PC-3 (cell line): ENCODE measurements at regions of chr12 and their contacts with region 1.

Region 1: GRCh38 chr12:52879394-52880351 is 25.2 kb downstream of the KRT8 start:
- DNase-seq: peak; percentile 94
- ATAC-seq: peak; percentile 82
- H3K4me3 ChIP-seq: peak overlapping the region; percentile 54
- H3K27ac ChIP-seq: peak overlapping the region; percentile 52
- H3K4me1 ChIP-seq: peaks cover 28% of the 10 kb centered on the region
- H3K27me3 ChIP-seq: no peaks in the 10 kb centered on the region
- CTCF ChIP-seq: peak; percentile 71

Region 2: GRCh38 chr12:52139552-52140062 is 740.1 kb before region 1 on chr12:
- CTCF ChIA-PET with region 1: no interaction called
- POLR2A ChIA-PET with region 1: no interaction called
- intact Hi-C with region 1: loop called (anchors 5 kb)
- DNase-seq: peak; percentile 90
- ATAC-seq: peak; percentile 68
- H3K4me3 ChIP-seq: no peak overlapping the region
- H3K27ac ChIP-seq: no peak overlapping the region
- H3K4me1 ChIP-seq: peaks cover 16% of the 10 kb centered on the region
- H3K27me3 ChIP-seq: no peaks in the 10 kb centered on the region
- CTCF ChIP-seq: peak; percentile 96

Region 3: DNA sequence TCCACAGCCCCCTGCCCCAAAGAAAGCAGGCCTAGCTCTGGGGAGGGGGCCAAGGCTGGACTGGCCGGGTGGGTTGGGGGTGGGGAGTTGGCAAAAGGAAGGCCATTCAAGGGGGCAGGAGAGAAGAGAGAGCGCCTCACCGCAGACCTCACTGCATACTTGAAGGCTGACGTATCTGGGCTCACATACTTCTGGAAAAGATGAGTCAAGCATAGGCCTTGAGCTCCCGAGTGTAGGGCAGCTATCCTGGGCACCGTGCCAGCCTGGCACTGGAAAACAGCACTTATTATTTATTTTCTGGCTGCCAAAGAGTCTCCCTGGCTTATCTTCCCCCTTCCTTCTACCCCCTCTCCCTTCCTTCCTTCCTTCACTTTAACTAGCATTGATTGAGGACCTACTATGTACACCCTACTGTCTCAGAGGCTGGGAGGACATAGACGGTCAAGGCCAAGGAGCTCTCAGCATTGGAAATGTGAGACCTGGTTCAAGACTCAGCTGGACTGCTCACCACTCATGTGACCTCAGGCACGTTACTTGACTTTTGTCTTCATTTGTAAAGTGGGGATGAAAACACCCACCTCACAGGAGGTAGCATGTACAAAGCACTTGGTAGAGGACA is 687.4 kb before region 1 on chr12:
- CTCF ChIA-PET with region 1: no interaction called
- POLR2A ChIA-PET with region 1: interaction called, 19 read pairs
- intact Hi-C with region 1: no loop called
- DNase-seq: peak; percentile 99
- ATAC-seq: peak; percentile 86
- H3K4me3 ChIP-seq: peak overlapping the region; percentile 78
- H3K27ac ChIP-seq: peak overlapping the region; percentile 69
- H3K4me1 ChIP-seq: peaks cover 80% of the 10 kb centered on the region
- H3K27me3 ChIP-seq: no peaks in the 10 kb centered on the region
- CTCF ChIP-seq: no peak

Region 4: GRCh38 chr12:52372216-52373154 is 507.2 kb before region 1 on chr12:
- CTCF ChIA-PET with region 1: interaction called, 18 read pairs
- POLR2A ChIA-PET with region 1: no interaction called
- intact Hi-C with region 1: loop called (anchors 1 kb)
- DNase-seq: peak; percentile 88
- ATAC-seq: peak; percentile 93
- H3K4me3 ChIP-seq: no peak overlapping the region
- H3K27ac ChIP-seq: no peak overlapping the region
- H3K4me1 ChIP-seq: no peaks in the 10 kb centered on the region
- H3K27me3 ChIP-seq: no peaks in the 10 kb centered on the region
- CTCF ChIP-seq: peak; percentile 87

Region 5: DNA sequence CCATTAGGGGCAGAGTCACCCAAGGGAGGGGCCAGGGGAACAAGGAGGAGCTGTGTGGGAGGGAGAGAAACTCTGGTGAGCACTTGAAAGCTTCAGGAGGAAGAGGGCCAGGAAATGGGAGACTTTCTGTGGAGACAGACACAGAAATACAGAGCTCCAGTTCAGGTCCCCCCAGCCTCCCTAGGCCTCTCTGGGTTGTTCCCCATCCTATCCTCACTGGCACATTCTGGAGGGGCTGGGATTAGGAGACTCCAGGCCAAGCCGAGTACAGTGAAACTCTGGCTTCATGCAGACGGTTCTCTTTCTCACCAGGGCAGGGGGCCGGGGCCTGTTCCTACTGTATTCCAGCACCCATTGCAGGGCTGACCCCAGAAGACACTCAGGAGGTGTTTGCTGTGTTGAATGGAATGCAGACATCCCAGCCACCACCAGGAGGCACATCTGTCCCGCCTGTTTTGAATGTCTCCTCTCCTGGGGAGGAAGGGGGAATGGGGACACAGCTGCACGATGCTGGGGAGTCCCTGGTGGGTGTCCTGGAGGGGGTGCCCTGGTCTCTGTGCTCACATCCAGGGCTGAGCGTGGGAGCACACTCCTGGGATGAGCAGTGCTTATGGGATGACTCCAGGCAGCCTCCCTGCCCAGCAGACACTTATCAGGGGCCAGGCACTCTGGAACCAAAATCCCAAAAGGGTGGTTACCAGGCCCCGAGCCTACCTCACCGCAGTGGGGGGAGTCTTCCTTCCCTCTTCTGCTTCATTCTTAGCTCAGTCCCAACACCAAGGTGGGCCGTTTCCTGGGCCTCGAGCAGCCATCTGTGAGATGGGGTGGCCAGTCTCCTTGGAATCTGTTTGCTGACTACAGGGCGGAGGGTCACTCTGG is 488.7 kb before region 1 on chr12:
- CTCF ChIA-PET with region 1: interaction called, 4 read pairs
- POLR2A ChIA-PET with region 1: no interaction called
- intact Hi-C with region 1: loop called (anchors 5 kb)
- DNase-seq: peak; percentile 62
- ATAC-seq: peak; percentile 70
- H3K4me3 ChIP-seq: no peak overlapping the region
- H3K27ac ChIP-seq: no peak overlapping the region
- H3K4me1 ChIP-seq: 0 out of 2 replicates have a peak, but pooled peaks cover 1% of the 10 kb centered on the region
- H3K27me3 ChIP-seq: no peaks in the 10 kb centered on the region
- CTCF ChIP-seq: peak; percentile 92

Region 6: GRCh38 chr12:52582971-52583456 is 296.7 kb before region 1 on chr12:
- CTCF ChIA-PET with region 1: no interaction called
- POLR2A ChIA-PET with region 1: no interaction called
- intact Hi-C with region 1: loop called (anchors 1 kb)
- DNase-seq: peak; percentile 78
- ATAC-seq: peak; percentile 77
- H3K4me3 ChIP-seq: no peak overlapping the region
- H3K27ac ChIP-seq: no peak overlapping the region
- H3K4me1 ChIP-seq: peaks cover 8% of the 10 kb centered on the region; the same call in 1 of the 2 replicates
- H3K27me3 ChIP-seq: no peaks in the 10 kb centered on the region
- CTCF ChIP-seq: peak; percentile 79

Region 7: GRCh38 chr12:52980693-52981423 is 101.2 kb after region 1 on chr12:
- CTCF ChIA-PET with region 1: interaction called, 68 read pairs
- POLR2A ChIA-PET with region 1: interaction called, 3 read pairs
- intact Hi-C with region 1: loop called (anchors 1 kb)
- DNase-seq: peak; percentile 96
- ATAC-seq: peak; percentile 84
- H3K4me3 ChIP-seq: no peak overlapping the region
- H3K27ac ChIP-seq: no peak overlapping the region
- H3K4me1 ChIP-seq: no peaks in the 10 kb centered on the region; the same call in 1 of the 2 replicates
- H3K27me3 ChIP-seq: no peaks in the 10 kb centered on the region
- CTCF ChIP-seq: peak; percentile 99

Region 8: GRCh38 chr12:53295070-53295890 is 415.6 kb after region 1 on chr12 and contains the start of gene PFDN5:
- CTCF ChIA-PET with region 1: no interaction called
- POLR2A ChIA-PET with region 1: no interaction called
- intact Hi-C with region 1: no loop called
- DNase-seq: peak; percentile 88
- ATAC-seq: peak; percentile 81
- H3K4me3 ChIP-seq: peak within 1 kb of the TSS; percentile 96
- H3K27ac ChIP-seq: peak within 1 kb of the TSS; percentile 98
- H3K4me1 ChIP-seq: peaks cover 44% of the 10 kb centered on the region
- H3K27me3 ChIP-seq: no peaks in the 10 kb centered on the region
- CTCF ChIP-seq: no peak
- total RNA-seq, gene PFDN5: 476 and 519 TPM in 2 replicates